Heart left ventricle (tissue), 16 donors: ENCODE measurements at regions of chr6 and their contacts with region 1.

Region 1: DNA sequence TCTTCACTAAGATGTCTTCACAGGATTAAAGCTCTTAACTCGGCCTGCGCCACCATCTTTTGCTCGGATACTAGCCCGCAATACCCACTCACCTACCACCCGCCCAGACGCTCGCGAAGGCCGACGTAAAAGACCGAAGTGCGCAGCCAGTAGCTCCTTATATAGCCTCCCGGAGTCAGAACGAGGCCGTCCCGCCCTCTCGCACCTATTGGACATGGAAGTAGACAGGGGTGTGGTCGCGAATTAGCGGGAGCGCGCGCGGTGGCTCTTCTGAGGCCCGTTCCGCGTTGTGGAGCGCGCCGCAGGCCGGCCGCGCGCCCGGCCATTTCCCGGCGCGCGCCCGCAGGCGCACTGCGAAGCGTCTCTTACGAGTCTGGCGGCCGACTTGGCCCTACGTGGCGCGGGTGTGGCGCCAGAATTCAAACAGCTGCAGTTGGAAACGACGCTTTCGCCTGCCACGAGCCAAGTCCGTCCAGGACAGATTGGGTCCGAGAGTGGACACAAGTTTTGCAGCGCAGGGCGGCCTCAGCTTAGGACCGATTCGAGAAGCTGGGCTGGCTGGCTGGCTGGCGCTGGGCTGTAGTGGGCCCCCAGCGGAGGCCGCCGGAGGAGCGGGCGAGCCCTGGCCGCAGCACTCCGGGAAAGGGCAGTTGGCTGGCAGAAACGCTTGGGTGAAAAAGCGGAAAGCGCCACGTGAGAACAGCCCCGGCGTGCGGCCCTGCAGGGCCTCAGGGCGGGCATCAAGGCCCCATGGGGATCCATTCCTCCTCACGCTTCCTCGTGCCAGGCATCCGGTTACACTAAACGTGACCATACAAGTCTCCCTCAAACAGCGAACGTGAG is 36.1 kb upstream of the SYNCRIP start:
- DNase-seq: peak; percentile 98 to 99 (median 98)
- ATAC-seq: peak; percentile 98 to 99 (median 98)
- H3K4me3 ChIP-seq: peak overlapping the region; percentile 63 to 93 (median 84)
- H3K27ac ChIP-seq: peak overlapping the region; percentile 82 to 95 (median 92)
- H3K4me1 ChIP-seq: peaks cover 0 to 45% (median 25%) of the 10 kb centered on the region in 12 donors
- H3K27me3 ChIP-seq: no peaks in the 10 kb centered on the region
- CTCF ChIP-seq: peak in 1 of 12 donors; percentile 14
- POLR2A ChIP-seq: peak; percentile 94 to 100

Region 2: DNA sequence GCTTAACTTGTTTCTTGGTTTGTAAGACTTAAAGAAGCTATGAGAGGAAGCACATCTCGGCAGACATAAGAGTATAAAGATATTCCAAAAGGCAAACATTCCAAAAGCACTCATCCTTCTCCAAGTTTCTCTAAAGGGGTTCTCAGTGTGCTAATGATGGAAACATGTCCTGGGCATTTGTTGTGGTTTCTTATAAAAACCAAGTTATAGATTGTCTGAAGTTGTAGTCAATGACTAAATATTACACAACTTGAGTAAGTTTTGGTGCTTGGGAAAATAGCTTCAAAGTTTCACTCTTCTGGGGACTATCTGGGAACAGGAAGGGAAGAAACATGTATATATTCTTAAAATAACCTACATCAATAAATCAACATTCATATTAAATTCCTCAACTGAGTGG is 786.2 kb before region 1 on chr6:
- intact Hi-C with region 1: no loop called
- DNase-seq: no peak
- ATAC-seq: no peak
- H3K4me3 ChIP-seq: no peak overlapping the region
- H3K27ac ChIP-seq: no peak overlapping the region
- H3K4me1 ChIP-seq: no peaks in the 10 kb centered on the region
- H3K27me3 ChIP-seq: no peaks in the 10 kb centered on the region
- CTCF ChIP-seq: no peak
- POLR2A ChIP-seq: no peak

Region 3: DNA sequence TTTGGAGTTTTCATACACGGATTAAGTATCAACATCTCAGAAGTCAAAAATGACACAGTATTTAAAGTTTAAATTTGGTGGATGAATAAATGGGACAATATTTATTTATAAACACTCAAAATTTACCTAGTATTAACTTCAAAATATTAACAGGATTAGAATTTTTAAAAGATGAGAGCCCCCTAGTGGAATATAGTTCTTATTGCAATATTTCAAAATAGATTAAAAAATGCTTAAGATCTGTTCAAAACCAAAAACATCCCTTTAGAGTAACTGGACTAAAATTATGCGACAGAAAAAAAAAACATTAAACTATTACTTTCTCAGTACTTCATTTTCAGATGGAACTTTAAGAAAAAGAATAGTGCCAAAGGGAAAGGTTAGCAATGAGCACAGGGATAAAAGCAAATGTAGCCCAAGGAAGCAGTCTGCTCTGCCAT is 141.7 kb before region 1 on chr6:
- intact Hi-C with region 1: loop called in 2 of 10 experiments (anchors 5 to 10 kb)
- DNase-seq: no peak
- ATAC-seq: no peak
- H3K4me3 ChIP-seq: no peak overlapping the region
- H3K27ac ChIP-seq: no peak overlapping the region
- H3K4me1 ChIP-seq: no peaks in the 10 kb centered on the region
- H3K27me3 ChIP-seq: no peaks in the 10 kb centered on the region
- CTCF ChIP-seq: peak; percentile 56 to 77 (median 63)
- POLR2A ChIP-seq: no peak

Region 4: GRCh38 chr6:85574932-85575598 is 103.8 kb before region 1 on chr6:
- intact Hi-C with region 1: loop called in 1 of 10 experiments (anchors 10 kb)
- DNase-seq: no peak
- ATAC-seq: no peak
- H3K4me3 ChIP-seq: no peak overlapping the region
- H3K27ac ChIP-seq: no peak overlapping the region
- H3K4me1 ChIP-seq: peaks cover 0 to 48% (median 28%) of the 10 kb centered on the region in 12 donors
- H3K27me3 ChIP-seq: no peaks in the 10 kb centered on the region
- CTCF ChIP-seq: no peak
- POLR2A ChIP-seq: no peak

Region 5: DNA sequence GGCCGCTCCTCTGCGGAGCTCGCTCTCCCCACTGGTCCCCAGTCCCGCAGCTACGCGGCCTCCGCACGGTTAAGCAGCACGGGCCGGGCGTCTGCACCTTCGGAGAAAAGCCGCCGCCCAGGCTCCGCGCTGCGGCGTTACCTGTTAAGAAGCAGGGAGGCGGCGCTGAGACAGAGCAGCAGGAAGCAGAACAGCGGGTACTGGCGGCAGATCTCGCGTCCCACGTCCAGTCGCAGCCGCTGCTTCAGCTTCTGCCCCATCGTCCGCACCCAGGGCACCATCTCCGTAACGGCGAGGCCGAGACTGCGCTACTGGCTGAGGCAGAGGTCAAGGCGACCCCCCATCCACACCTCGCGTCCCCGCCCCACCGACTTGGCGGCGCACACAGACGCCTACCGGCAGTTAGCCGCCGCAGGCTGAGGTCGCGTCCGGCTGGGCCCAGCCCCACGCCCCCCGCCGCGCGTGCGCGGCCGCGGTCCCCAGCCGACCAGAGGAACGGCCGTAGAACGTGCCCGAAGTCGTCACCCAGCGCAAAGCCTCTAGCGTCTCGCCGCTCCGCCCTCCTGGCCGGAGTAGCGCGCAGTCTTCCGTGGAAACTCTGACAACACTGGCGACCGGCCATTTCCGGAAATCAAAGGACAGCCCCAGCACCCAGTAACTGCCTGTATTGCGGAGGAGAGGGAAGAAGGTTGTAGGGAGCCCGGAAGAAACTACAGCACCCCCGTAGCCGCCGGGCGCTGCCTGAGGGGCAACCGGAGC is 85.2 kb before region 1 on chr6 and contains the start of gene SNX14:
- intact Hi-C with region 1: loop called in 8 of 10 experiments (anchors 1 to 5 kb)
- DNase-seq: peak; percentile 97 to 98 (median 97)
- ATAC-seq: peak; percentile 96 to 99 (median 97)
- H3K4me3 ChIP-seq: peak within 1 kb of the TSS; percentile 67 to 94 (median 76)
- H3K27ac ChIP-seq: peak within 1 kb of the TSS; percentile 86 to 98 (median 93)
- H3K4me1 ChIP-seq: peaks cover 0 to 31% (median 20%) of the 10 kb centered on the region in 12 donors
- H3K27me3 ChIP-seq: no peaks in the 10 kb centered on the region
- CTCF ChIP-seq: peak in 6 of 12 donors; percentile 5 to 30 (median 14)
- POLR2A ChIP-seq: peak in 1 of 2 donors; percentile 84
- total RNA-seq, gene SNX14: 23.3 to 41.8 (median 31.8) TPM

Region 6: DNA sequence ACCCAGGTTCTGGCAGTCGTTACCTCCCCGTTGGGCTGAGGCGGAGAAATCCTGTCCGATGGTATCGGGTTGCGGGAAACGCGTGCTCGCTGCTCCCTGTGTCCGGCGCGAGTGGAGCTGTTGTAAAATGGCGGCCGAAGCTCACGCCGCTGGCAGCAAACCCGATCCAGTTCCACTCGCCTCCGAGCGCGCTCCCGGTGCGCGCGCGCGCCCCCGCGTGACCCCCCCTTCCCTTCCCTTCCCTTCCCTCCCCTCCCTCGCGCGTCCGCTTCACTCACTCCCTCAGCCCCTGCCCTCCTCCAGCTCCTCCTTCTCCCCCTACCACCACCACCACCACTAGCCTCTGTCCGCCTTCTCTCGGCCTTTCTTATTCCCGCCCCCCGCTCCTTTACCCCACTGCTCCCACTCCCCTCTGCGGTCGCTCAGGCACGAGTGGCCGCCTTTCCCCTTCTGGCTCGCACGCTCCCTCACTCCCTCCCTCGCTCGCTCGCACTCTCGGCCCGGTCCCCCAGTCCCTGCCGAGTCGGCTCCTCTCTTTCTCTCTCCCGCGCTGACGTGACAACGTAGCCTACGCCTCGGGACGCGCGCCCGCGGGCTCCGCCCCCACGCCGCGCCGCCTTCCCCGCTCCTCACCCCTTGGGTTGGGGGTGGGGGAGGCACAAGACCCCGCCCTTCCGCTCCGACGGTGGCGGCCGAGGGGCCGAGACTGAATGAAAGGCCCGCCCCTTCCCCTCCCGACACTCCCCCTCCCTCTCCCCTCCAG is 35.9 kb before region 1 on chr6 and contains the start of gene SYNCRIP:
- intact Hi-C with region 1: loop called (anchors 1 to 2 kb)
- DNase-seq: peak; percentile 99 to 100 (median 99)
- ATAC-seq: peak; percentile 90 to 95 (median 94)
- H3K4me3 ChIP-seq: peak within 1 kb of the TSS; percentile 64 to 99 (median 93)
- H3K27ac ChIP-seq: peak within 1 kb of the TSS; percentile 95 to 100 (median 99)
- H3K4me1 ChIP-seq: peaks cover 4 to 47% (median 36%) of the 10 kb centered on the region in 12 donors
- H3K27me3 ChIP-seq: no peaks in the 10 kb centered on the region
- CTCF ChIP-seq: no peak
- POLR2A ChIP-seq: peak; percentile 23 to 86
- total RNA-seq, gene SYNCRIP: 28.4 to 71.0 (median 59.0) TPM

Region 7: DNA sequence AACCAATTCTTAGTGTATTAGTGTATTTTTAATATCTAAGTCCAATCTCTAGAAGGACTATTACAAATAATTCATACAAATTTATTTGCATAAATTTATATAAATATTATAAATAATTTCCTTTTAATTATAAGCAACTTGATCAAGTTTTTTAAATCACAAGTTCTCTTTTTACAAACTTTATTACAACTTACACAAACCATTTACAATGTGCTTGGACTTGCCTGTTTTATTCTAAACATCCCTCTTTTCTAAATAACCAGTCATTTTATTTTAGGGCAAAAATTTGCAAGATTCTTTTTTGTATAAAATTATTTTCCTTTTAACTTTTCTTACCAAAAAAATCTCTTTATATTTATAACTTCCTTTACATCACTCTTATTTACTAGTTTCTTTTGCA is 47.4 kb after region 1 on chr6:
- intact Hi-C with region 1: no loop called
- DNase-seq: no peak
- ATAC-seq: no peak
- H3K4me3 ChIP-seq: no peak overlapping the region
- H3K27ac ChIP-seq: no peak overlapping the region
- H3K4me1 ChIP-seq: no peaks in the 10 kb centered on the region
- H3K27me3 ChIP-seq: no peaks in the 10 kb centered on the region
- CTCF ChIP-seq: no peak
- POLR2A ChIP-seq: no peak

Region 8: DNA sequence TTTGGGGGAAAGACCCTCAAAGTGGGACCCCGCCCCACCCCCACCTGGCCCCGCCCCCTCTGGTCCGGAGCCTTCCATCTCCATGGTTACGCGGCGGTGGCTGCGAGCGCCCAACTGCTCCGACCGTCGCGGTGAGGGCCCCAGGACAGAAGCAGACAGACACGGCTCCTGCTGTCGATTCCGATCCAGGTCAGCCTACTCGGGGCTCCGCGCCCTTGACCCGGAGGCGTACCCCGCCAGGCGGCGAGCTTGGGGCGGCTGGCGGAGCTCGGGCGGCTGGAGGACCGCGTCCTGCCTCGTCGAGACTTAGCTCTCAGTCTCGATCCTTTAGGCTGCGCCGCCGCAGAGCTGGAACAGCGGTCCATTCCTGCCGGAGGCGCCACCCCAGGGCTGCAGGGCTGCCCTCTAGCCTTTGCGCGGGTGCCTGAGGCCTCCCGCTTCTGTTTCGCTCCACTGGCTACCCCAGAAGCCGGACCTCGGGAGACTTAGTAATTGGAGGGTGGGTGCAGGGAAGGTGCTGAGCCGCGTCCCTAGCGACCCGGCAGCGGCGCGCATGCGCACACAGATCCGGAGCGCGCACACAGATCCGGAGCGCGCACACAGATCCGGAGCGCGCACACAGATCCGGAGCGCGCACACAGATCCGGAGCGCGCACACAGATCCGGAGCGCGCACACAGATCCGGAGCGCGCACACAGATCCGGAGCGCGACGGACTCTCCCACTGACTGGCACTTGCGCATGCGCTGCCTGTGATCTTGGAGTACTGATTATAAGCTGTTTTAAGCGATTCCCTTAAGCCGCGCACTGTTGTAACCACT is 1729.3 kb after region 1 on chr6 and contains the start of gene CFAP206:
- intact Hi-C with region 1: loop called in 1 of 10 experiments (anchors 5 kb)
- DNase-seq: peak; percentile 77 to 90 (median 86)
- ATAC-seq: peak; percentile 88 to 97 (median 96)
- H3K4me3 ChIP-seq: peak within 1 kb of the TSS; percentile 54 to 97 (median 91)
- H3K27ac ChIP-seq: peak within 1 kb of the TSS; percentile 44 to 88 (median 78)
- H3K4me1 ChIP-seq: peaks cover 0 to 11% (median 5%) of the 10 kb centered on the region in 12 donors
- H3K27me3 ChIP-seq: no peaks in the 10 kb centered on the region
- CTCF ChIP-seq: peak in 5 of 12 donors; percentile 15 to 46 (median 19)
- POLR2A ChIP-seq: no peak
- total RNA-seq, gene CFAP206: 0.12 to 0.41 (median 0.23) TPM in 7 of 9 donors, not detected in the others